ENCODE measurements at regions of chr13 and their contacts with region 1.

Region 1: GRCh38 chr13:27783111-27783510 is 9.2 kb upstream of the GSX1 start:
- DNase-seq: no peak
- ATAC-seq: peak in 3 of 4 donors; percentile 56 to 69 (median 65)
- H3K4me3 ChIP-seq: no peak overlapping the region
- H3K27ac ChIP-seq: no peak overlapping the region
- H3K4me1 ChIP-seq: no peaks in the 10 kb centered on the region
- H3K27me3 ChIP-seq: peaks cover under 1 to 82% (median 11%) of the 10 kb centered on the region in 9 donors
- CTCF ChIP-seq: peak in 10 of 12 donors; percentile 10 to 60 (median 38)
- POLR2A ChIP-seq: no peak

Region 2: DNA sequence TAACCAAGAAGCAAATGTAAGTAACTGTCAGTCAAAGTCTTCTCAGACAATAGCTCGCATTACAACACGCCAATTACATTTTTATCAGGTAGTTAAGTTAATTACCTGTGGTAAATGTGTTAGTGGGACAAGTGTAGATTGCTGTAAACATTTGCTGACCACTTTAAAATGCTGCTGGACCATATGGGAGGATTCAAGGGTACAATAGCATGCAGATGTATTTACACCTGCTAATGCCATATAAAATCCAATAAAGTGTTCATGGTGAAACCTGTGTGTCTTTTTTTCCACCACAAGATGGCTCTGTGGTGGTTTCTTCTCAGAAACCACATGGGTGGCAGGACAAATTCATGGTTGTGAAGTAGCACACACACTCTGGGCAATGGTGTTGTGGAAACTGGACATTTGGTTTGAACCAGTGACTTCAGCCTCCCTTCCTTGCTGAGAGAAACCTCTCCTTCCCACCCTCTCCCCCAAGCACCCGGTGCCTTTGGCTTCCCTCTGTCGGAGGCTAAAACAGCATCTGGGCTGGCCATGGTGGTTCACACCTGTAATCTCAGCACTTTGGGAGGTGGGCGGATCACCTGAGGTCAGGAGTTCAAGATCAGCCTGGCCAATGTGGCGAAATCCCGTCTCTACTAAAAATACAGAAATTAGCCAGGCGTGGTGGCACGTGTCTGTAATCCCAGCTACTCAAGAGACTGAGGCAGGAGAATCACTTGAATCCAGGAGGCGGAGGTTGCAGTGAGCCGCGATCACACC is 376.8 kb before region 1 on chr13:
- intact Hi-C with region 1: loop called in 1 of 10 experiments (anchors 10 kb)
- DNase-seq: no peak
- ATAC-seq: peak in 2 of 4 donors; percentile 31 to 47
- H3K4me3 ChIP-seq: no peak overlapping the region
- H3K27ac ChIP-seq: no peak overlapping the region
- H3K4me1 ChIP-seq: peaks cover 0 to 12% (median 7%) of the 10 kb centered on the region in 12 donors
- H3K27me3 ChIP-seq: peaks cover 0 to 9% (median 0%) of the 10 kb centered on the region in 9 donors
- CTCF ChIP-seq: peak; percentile 34 to 67 (median 52)
- POLR2A ChIP-seq: no peak

Region 3: GRCh38 chr13:27556109-27556508 is 227.0 kb before region 1 on chr13:
- intact Hi-C with region 1: loop called in 1 of 10 experiments (anchors 10 kb)
- DNase-seq: peak in 1 of 5 donors; percentile 25
- ATAC-seq: peak in 2 of 4 donors; percentile 42 to 61
- H3K4me3 ChIP-seq: no peak overlapping the region
- H3K27ac ChIP-seq: no peak overlapping the region
- H3K4me1 ChIP-seq: peaks cover 0 to 14% (median 4%) of the 10 kb centered on the region in 12 donors
- H3K27me3 ChIP-seq: no peaks in the 10 kb centered on the region
- CTCF ChIP-seq: peak in 6 of 12 donors; percentile 22 to 37 (median 26)
- POLR2A ChIP-seq: no peak

Region 4: DNA sequence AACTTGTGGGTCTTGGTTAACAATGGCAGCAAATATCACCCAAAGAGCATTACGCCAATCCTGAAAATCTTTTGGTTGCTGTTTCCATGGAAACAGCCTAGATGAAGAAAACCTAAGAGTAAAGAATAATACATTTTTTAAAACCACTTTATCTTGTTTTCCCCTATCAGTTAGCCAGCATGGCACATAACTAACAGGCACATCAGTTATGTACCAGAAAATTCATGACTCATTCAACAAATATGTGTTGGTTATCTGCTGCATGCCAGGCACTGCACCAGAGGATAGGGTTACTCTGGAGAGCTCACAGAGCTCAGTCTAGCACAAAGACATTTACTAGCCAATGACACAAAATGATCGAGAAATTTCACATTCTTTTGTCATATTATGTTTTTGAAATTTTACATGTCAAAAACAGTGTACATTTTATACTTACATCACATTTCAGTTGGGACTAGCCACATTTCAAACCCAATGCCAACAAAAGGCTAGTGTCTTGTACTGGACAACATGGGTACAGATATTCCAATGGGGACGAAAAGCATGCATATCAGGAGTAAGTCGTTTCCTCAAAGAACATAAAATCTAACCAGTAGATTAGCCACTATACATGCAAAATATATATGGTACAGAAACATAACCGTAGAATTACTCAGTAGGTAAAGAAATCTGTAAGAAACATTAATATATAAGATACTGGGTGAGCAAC is 183.1 kb before region 1 on chr13:
- intact Hi-C with region 1: no loop called
- DNase-seq: peak in 3 of 5 donors; percentile 27 to 41 (median 30)
- ATAC-seq: peak; percentile 85 to 96 (median 92)
- H3K4me3 ChIP-seq: no peak overlapping the region
- H3K27ac ChIP-seq: peak overlapping the region in 9 of 12 donors; percentile 11 to 79 (median 56)
- H3K4me1 ChIP-seq: peaks cover 0 to 50% (median 11%) of the 10 kb centered on the region in 12 donors
- H3K27me3 ChIP-seq: no peaks in the 10 kb centered on the region
- CTCF ChIP-seq: no peak
- POLR2A ChIP-seq: no peak

Region 5: DNA sequence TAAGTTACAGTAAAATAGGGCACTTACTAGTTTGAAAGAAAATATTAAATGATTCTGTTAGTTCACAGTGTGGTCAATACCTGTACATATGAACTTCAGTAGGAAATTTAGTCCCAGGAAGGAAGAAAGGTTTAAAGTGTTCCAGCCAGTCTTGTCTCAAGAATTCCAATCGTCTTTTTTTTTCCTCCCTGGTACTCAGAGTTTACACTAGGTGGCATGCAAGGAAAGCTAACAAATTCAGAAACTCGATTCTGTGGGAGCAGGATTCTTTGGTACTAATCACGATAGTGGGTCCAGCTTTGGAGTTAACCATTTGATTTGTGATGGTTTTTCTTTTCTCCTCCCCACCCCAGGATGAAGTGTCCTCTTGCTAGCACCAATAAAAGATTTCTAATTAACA is 117.8 kb before region 1 on chr13:
- intact Hi-C with region 1: loop called in 3 of 10 experiments (anchors 5 to 10 kb)
- DNase-seq: no peak
- ATAC-seq: no peak
- H3K4me3 ChIP-seq: no peak overlapping the region
- H3K27ac ChIP-seq: no peak overlapping the region
- H3K4me1 ChIP-seq: peaks cover 0 to 31% (median 6%) of the 10 kb centered on the region in 12 donors
- H3K27me3 ChIP-seq: no peaks in the 10 kb centered on the region
- CTCF ChIP-seq: peak in 10 of 12 donors; percentile 9 to 45 (median 23)
- POLR2A ChIP-seq: no peak

Region 6: DNA sequence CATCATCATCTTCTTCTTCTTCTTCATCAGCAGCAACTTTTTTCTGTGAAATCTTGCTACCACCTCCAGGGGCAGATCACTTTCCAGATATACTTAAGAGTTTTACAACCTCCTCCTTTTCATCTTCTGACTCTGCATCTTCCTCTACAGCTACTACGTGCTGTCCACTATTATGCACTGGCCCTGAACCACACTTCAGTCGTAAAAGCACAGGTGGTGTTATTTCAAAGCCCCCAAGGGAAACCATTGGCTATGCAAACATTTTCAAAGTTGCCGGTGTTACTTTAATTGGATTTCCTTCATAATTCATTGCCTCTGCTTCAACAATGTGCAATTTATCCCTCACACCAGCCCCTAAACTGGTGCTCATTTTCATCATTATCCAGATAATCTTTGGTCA is 86.4 kb before region 1 on chr13:
- intact Hi-C with region 1: no loop called
- DNase-seq: no peak
- ATAC-seq: no peak
- H3K4me3 ChIP-seq: no peak overlapping the region
- H3K27ac ChIP-seq: no peak overlapping the region
- H3K4me1 ChIP-seq: no peaks in the 10 kb centered on the region
- H3K27me3 ChIP-seq: peaks cover 0 to 2% (median 0%) of the 10 kb centered on the region in 9 donors
- CTCF ChIP-seq: no peak
- POLR2A ChIP-seq: no peak